ENCODE measurements at regions of chr10 and their contacts with region 1.

Region 1: GRCh38 chr10:88080213-88080612 is 216.8 kb downstream of the PTEN start:
- DNase-seq: peak; percentile 28
- H3K4me3 Mint-ChIP-seq: no peak overlapping the region
- H3K27ac Mint-ChIP-seq: peak overlapping the region; percentile 51
- H3K4me1 Mint-ChIP-seq: peaks cover 28% of the 10 kb centered on the region
- H3K27me3 Mint-ChIP-seq: no peaks in the 10 kb centered on the region
- CTCF ChIP-seq: no peak

Region 2: GRCh38 chr10:88091490-88092105 is 11.4 kb after region 1 on chr10:
- CTCF ChIA-PET with region 1: interaction called, 3 read pairs
- POLR2A ChIA-PET with region 1: interaction called, 19 read pairs
- intact Hi-C with region 1: no loop called
- DNase-seq: peak; percentile 80
- H3K4me3 Mint-ChIP-seq: no peak overlapping the region
- H3K27ac Mint-ChIP-seq: peak overlapping the region; percentile 63
- H3K4me1 Mint-ChIP-seq: peaks cover 66% of the 10 kb centered on the region
- H3K27me3 Mint-ChIP-seq: no peaks in the 10 kb centered on the region
- CTCF ChIP-seq: no peak

Measured in MCF 10A (cell line).